Panc1 (cell line): ENCODE measurements at regions of chr3 and their contacts with region 1.

Region 1: DNA sequence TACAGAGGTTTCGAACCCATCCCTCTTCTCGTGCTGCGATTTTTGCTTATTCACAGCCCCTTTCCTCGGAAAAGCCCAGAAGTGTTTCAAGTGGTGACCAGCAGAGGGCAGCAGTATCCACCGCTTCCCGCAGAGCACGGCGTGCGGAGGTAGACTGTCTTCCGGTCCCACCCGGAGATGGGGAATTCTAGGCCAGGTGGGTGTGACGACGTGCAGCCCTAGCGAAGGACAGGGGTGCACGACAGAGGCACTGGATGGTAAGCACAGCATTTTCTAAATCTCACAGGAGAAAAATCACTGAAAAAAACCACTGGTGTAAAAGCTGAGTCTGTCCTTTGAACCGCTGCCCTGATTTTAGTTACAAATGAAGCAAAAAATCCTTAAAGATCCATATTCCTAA is 7.4 kb upstream of the PSMD6 start:
- DNase-seq: peak; percentile 27
- ATAC-seq: peak; percentile 92
- H3K4me3 ChIP-seq: peak overlapping the region in 1 of 2 experiments; percentile 30; a peak in 2 of 4 replicates
- H3K27ac ChIP-seq: no peak overlapping the region
- H3K4me1 ChIP-seq: no peaks in the 10 kb centered on the region
- H3K27me3 ChIP-seq: no peaks in the 10 kb centered on the region
- CTCF ChIP-seq: peak; percentile 83

Region 2: DNA sequence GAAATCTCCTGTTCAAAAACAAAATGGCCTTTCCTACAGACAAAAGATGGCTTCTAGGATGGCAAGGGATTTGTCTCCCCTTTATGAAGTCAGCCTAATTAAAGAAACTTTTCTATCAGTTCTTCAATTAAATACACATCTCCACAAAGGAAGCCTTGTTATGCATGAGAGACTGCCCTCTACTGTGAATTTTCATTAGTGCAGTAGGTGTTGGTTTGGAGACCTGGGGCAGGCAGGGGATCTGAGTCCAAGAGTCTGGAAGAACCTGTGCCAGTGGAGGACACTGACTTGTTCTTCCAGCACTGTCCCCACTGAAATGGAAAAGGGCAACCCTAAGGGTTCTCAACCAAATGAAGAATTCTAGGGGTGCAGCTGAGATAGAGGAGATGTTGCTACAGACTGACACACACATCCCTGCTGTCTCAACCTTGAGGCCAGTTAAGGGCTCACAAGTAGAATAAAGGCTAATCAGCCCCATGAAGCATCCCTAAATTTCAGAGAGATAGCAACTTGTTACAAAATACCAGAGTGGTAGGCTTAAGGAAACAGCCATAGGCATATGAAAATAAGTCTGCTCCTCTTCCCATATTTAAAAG is 368.6 kb after region 1 on chr3:
- CTCF ChIA-PET with region 1: no interaction called
- POLR2A ChIA-PET with region 1: no interaction called
- in situ Hi-C with region 1: no loop called
- intact Hi-C with region 1: loop called (anchors 2 kb)
- DNase-seq: peak; percentile 20
- ATAC-seq: no peak
- H3K4me3 ChIP-seq: no peak overlapping the region
- H3K27ac ChIP-seq: no peak overlapping the region
- H3K4me1 ChIP-seq: no peaks in the 10 kb centered on the region
- H3K27me3 ChIP-seq: no peaks in the 10 kb centered on the region
- CTCF ChIP-seq: peak; percentile 58

Region 3: GRCh38 chr3:64484289-64484992 is 453.7 kb after region 1 on chr3:
- CTCF ChIA-PET with region 1: interaction called, 3 read pairs
- POLR2A ChIA-PET with region 1: no interaction called
- in situ Hi-C with region 1: no loop called
- intact Hi-C with region 1: loop called (anchors 1 kb)
- DNase-seq: peak; percentile 47
- ATAC-seq: peak; percentile 93
- H3K4me3 ChIP-seq: no peak overlapping the region
- H3K27ac ChIP-seq: no peak overlapping the region
- H3K4me1 ChIP-seq: no peaks in the 10 kb centered on the region
- H3K27me3 ChIP-seq: no peaks in the 10 kb centered on the region
- CTCF ChIP-seq: peak; percentile 78